ENCODE measurements at regions of chr20 and their contacts with region 1.

Region 1: GRCh38 chr20:50399917-50400704 is 110.1 kb upstream of the PTPN1 start:
- DNase-seq: no peak
- H3K4me3 ChIP-seq: no peak overlapping the region
- H3K27ac ChIP-seq: peak overlapping the region; percentile 75 to 94 (median 87)
- H3K4me1 ChIP-seq: peaks cover 57 to 59% of the 10 kb centered on the region in 2 donors
- H3K27me3 ChIP-seq: no peaks in the 10 kb centered on the region
- CTCF ChIP-seq: peak in 3 of 6 experiments; percentile 18 to 30 (median 24)
- POLR2A ChIP-seq: no peak

Region 2: GRCh38 chr20:50450881-50451752 is 51.0 kb after region 1 on chr20:
- intact Hi-C with region 1: loop called (anchors 5 to 10 kb)
- DNase-seq: peak; percentile 62 to 89 (median 83)
- H3K4me3 ChIP-seq: peak overlapping the region in 1 of 4 donors; percentile 28
- H3K27ac ChIP-seq: peak overlapping the region; percentile 71 to 97 (median 92)
- H3K4me1 ChIP-seq: peaks cover 13 to 14% of the 10 kb centered on the region in 2 donors
- H3K27me3 ChIP-seq: no peaks in the 10 kb centered on the region
- CTCF ChIP-seq: no peak
- POLR2A ChIP-seq: peak in 1 of 2 donors; percentile 47

Region 3: GRCh38 chr20:50484276-50484976 is 84.3 kb after region 1 on chr20:
- intact Hi-C with region 1: no loop called
- DNase-seq: no peak
- H3K4me3 ChIP-seq: no peak overlapping the region
- H3K27ac ChIP-seq: peak overlapping the region in 3 of 5 donors; percentile 65 to 86 (median 80)
- H3K4me1 ChIP-seq: peaks cover 0 to 5% of the 10 kb centered on the region in 2 donors
- H3K27me3 ChIP-seq: no peaks in the 10 kb centered on the region
- CTCF ChIP-seq: no peak
- POLR2A ChIP-seq: no peak

Measured in adrenal gland (tissue), 19 donors.